Activated B cell treated with CpG ODN at 0.5 μM for 24 hours (primary cell): ENCODE measurements at regions of chr11 and their contacts with region 1.

Region 1: GRCh38 chr11:72030472-72031045 is 31.9 kb downstream of the IL18BP start:
- DNase-seq: no peak
- ATAC-seq: no peak
- H3K4me3 Mint-ChIP-seq: no peak overlapping the region
- H3K27ac Mint-ChIP-seq: peak overlapping the region; percentile 41
- H3K4me1 Mint-ChIP-seq: peaks cover 22% of the 10 kb centered on the region
- H3K27me3 Mint-ChIP-seq: no peaks in the 10 kb centered on the region
- CTCF ChIP-seq: no peak

Region 2: GRCh38 chr11:71518506-71519471 is 511.8 kb before region 1 on chr11:
- CTCF ChIA-PET with region 1: no interaction called
- POLR2A ChIA-PET with region 1: no interaction called
- intact Hi-C with region 1: no loop called
- DNase-seq: no peak
- ATAC-seq: no peak
- H3K4me3 Mint-ChIP-seq: no peak overlapping the region
- H3K27ac Mint-ChIP-seq: no peak overlapping the region
- H3K4me1 Mint-ChIP-seq: no peaks in the 10 kb centered on the region
- H3K27me3 Mint-ChIP-seq: no peaks in the 10 kb centered on the region
- CTCF ChIP-seq: no peak

Region 3: GRCh38 chr11:71977743-71978418 is 52.7 kb before region 1 on chr11:
- CTCF ChIA-PET with region 1: interaction called, 37 read pairs
- POLR2A ChIA-PET with region 1: no interaction called
- intact Hi-C with region 1: no loop called
- DNase-seq: no peak
- ATAC-seq: peak; percentile 96
- H3K4me3 Mint-ChIP-seq: no peak overlapping the region
- H3K27ac Mint-ChIP-seq: peak overlapping the region; percentile 91
- H3K4me1 Mint-ChIP-seq: peaks cover 16% of the 10 kb centered on the region
- H3K27me3 Mint-ChIP-seq: no peaks in the 10 kb centered on the region
- CTCF ChIP-seq: peak; percentile 26

Region 4: GRCh38 chr11:72058416-72059034 is 28.0 kb after region 1 on chr11:
- CTCF ChIA-PET with region 1: interaction called, 3 read pairs
- POLR2A ChIA-PET with region 1: interaction called, 12 read pairs
- intact Hi-C with region 1: no loop called
- DNase-seq: no peak
- ATAC-seq: no peak
- H3K4me3 Mint-ChIP-seq: no peak overlapping the region
- H3K27ac Mint-ChIP-seq: no peak overlapping the region
- H3K4me1 Mint-ChIP-seq: peaks cover 7% of the 10 kb centered on the region
- H3K27me3 Mint-ChIP-seq: no peaks in the 10 kb centered on the region
- CTCF ChIP-seq: no peak

Region 5: GRCh38 chr11:72091005-72091691 is 60.6 kb after region 1 on chr11:
- CTCF ChIA-PET with region 1: interaction called, 152 read pairs
- POLR2A ChIA-PET with region 1: interaction called, 16 read pairs
- intact Hi-C with region 1: loop called (anchors 1 kb)
- DNase-seq: peak; percentile 39
- ATAC-seq: peak; percentile 99
- H3K4me3 Mint-ChIP-seq: no peak overlapping the region
- H3K27ac Mint-ChIP-seq: peak overlapping the region; percentile 33
- H3K4me1 Mint-ChIP-seq: peaks cover 14% of the 10 kb centered on the region
- H3K27me3 Mint-ChIP-seq: no peaks in the 10 kb centered on the region
- CTCF ChIP-seq: no peak

Region 6: GRCh38 chr11:72119198-72119597 is 88.6 kb after region 1 on chr11:
- CTCF ChIA-PET with region 1: no interaction called
- POLR2A ChIA-PET with region 1: no interaction called
- intact Hi-C with region 1: no loop called
- DNase-seq: no peak
- ATAC-seq: no peak
- H3K4me3 Mint-ChIP-seq: no peak overlapping the region
- H3K27ac Mint-ChIP-seq: no peak overlapping the region
- H3K4me1 Mint-ChIP-seq: no peaks in the 10 kb centered on the region
- H3K27me3 Mint-ChIP-seq: peaks cover 30% of the 10 kb centered on the region
- CTCF ChIP-seq: no peak

Region 7: DNA sequence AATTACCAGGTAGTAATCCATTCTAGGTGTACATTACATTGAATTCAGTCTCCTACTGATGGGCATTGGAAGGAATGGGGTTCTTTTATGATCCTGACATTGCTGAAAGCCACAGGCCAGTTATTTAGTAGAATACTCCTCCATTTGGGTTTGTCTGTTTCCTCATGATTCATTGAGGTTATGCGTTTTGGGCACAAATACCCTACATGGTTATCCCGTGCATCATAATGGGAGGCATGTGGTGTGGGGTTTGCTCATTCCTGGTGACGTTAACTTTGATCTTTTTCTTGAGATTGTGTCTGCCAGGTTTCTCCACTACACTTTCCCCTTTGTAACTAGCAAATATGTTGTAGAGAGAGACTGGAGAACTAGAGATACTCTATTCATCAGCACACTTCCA is 110.5 kb after region 1 on chr11:
- CTCF ChIA-PET with region 1: interaction called, 108 read pairs
- POLR2A ChIA-PET with region 1: interaction called, 3 read pairs
- intact Hi-C with region 1: loop called (anchors 1 kb)
- DNase-seq: no peak
- ATAC-seq: no peak
- H3K4me3 Mint-ChIP-seq: no peak overlapping the region
- H3K27ac Mint-ChIP-seq: no peak overlapping the region
- H3K4me1 Mint-ChIP-seq: peaks cover 1% of the 10 kb centered on the region
- H3K27me3 Mint-ChIP-seq: peaks cover 17% of the 10 kb centered on the region
- CTCF ChIP-seq: no peak

Region 8: GRCh38 chr11:72173291-72173690 is 142.7 kb after region 1 on chr11:
- CTCF ChIA-PET with region 1: no interaction called
- POLR2A ChIA-PET with region 1: no interaction called
- intact Hi-C with region 1: no loop called
- DNase-seq: no peak
- ATAC-seq: no peak
- H3K4me3 Mint-ChIP-seq: no peak overlapping the region
- H3K27ac Mint-ChIP-seq: no peak overlapping the region
- H3K4me1 Mint-ChIP-seq: no peaks in the 10 kb centered on the region
- H3K27me3 Mint-ChIP-seq: peaks cover 14% of the 10 kb centered on the region
- CTCF ChIP-seq: no peak

Region 9: DNA sequence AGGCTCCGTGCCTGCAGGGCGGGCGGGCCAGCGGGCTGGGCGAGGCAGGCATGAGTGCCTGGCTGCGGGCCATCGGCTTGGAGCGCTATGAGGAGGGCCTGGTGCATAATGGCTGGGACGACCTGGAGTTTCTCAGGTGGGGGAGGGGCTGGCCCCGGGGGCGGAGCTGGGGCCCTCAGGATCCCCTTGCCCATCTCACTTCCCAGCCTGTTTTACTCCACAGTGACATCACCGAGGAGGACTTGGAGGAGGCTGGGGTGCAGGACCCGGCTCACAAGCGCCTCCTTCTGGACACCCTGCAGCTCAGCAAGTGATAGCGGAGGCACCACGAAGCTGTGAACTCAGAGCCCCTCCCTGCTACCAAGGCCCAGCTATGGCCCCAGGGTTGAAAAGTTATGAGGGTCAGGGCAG is 207.5 kb after region 1 on chr11:
- CTCF ChIA-PET with region 1: interaction called, 7 read pairs
- POLR2A ChIA-PET with region 1: no interaction called
- intact Hi-C with region 1: loop called (anchors 1 kb)
- DNase-seq: no peak
- ATAC-seq: peak; percentile 68
- H3K4me3 Mint-ChIP-seq: no peak overlapping the region
- H3K27ac Mint-ChIP-seq: no peak overlapping the region
- H3K4me1 Mint-ChIP-seq: peaks cover 41% of the 10 kb centered on the region
- H3K27me3 Mint-ChIP-seq: peaks cover 33% of the 10 kb centered on the region
- CTCF ChIP-seq: no peak

Region 10: DNA sequence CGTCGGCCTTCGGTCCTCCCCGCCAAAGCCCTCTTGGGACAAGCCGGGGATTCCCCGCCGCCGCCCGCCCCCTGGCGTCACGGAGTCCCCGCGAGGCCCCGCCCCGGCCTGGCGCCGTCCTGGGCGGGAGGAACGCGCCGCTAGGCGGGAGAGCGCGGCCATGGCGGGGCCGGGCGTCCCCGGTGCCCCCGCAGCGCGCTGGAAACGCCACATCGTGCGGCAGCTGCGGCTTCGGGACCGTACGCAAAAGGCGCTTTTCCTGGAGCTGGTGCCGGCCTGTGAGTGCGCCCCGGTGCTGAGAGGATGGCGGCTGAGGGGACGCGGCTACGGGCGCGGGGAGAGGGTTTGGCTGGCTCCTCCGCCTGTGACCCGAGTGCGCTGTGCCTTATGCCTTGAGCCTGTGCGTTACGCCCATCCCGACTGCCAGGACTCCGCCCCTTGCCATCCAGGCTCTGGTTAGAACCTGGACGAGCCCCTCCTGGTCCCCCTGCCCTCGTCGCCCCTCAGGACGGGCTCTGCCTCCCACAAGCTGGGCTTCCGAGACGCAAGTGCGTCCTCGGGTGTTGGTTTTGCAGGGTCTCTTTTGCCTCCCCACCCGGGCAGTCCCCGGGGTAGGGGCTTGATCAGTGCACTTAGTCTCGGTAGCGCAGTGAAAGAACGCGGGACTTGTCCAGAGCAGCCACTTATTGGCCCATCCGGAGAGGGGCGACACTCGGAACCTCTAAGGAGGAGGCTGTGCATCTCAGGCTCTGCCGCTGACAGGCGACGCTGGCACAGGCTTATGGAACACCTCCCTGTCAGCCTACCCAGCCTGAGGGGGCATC is 783.9 kb after region 1 on chr11 and contains the start of gene ATG16L2:
- CTCF ChIA-PET with region 1: no interaction called
- POLR2A ChIA-PET with region 1: no interaction called
- intact Hi-C with region 1: no loop called
- DNase-seq: peak; percentile 97
- ATAC-seq: peak; percentile 75
- H3K4me3 Mint-ChIP-seq: peak within 1 kb of the TSS; percentile 98
- H3K27ac Mint-ChIP-seq: peak within 1 kb of the TSS; percentile 94
- H3K4me1 Mint-ChIP-seq: peaks cover 54% of the 10 kb centered on the region
- H3K27me3 Mint-ChIP-seq: no peaks in the 10 kb centered on the region
- CTCF ChIP-seq: no peak
- total RNA-seq, gene ATG16L2: 73.5 and 96.7 TPM in 2 replicates